Activated CD4-positive, alpha-beta memory T cell treated with anti-CD3 and anti-CD28 coated beads for 36 hours (primary cell): ENCODE measurements at regions of chr19 and their contacts with region 1.

Region 1: DNA sequence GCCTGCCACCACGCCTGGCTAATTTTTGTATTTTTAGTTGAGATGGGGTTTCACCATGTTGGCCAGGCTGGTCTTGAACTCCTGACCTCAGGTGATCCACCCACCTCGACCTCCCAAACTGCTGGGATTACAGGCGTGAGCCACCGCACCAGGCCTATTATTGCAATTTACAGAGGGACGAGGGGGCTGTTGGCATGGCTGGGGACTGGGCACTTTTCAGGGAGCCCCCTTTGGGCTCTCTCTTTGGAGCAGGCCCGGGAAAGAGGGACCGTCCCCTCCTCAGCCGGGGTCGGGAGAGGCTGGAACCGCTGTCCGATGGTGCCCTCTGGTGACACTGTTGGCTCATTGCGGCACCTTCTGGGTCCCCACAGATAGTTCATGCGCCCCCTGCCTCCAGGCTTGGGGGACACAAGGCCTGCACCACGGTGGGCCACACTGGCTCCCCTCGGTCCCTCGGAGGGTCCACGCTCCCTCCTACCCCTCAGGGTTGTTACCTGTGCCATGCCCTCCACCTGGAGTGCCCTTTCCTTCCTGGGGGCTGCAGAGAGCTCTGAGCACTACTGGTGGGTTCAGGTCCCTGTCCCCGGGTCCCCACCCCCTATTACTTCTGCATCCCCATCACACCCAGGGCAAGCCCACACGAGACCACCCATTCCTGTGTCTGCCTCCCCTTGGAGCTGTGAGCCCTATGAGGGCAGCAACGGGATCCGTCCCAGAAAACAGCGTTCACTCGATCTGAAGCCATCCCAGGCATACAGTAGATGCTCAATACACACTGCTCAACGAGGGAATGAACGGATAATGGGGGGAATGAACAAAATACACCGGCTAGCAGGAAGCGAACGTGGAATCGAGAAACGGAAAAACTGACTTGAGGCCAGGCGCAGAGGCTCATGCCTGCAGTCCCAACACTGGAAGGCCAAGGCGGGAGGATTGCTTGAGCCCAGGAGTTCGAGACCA is 12.5 kb downstream of the FEM1A start:
- DNase-seq: peak; percentile 73
- H3K4me3 Mint-ChIP-seq: no peak overlapping the region
- H3K27ac Mint-ChIP-seq: no peak overlapping the region
- H3K4me1 Mint-ChIP-seq: no peaks in the 10 kb centered on the region
- H3K27me3 Mint-ChIP-seq: no peaks in the 10 kb centered on the region

Region 2: GRCh38 chr19:4732680-4733114 is 71.3 kb before region 1 on chr19:
- CTCF ChIA-PET with region 1: interaction called, 17 read pairs
- POLR2A ChIA-PET with region 1: interaction called, 3 read pairs
- intact Hi-C with region 1: loop called (anchors 1 kb)
- DNase-seq: peak; percentile 70
- H3K4me3 Mint-ChIP-seq: peak overlapping the region; percentile 20
- H3K27ac Mint-ChIP-seq: no peak overlapping the region
- H3K4me1 Mint-ChIP-seq: peaks cover 4% of the 10 kb centered on the region
- H3K27me3 Mint-ChIP-seq: peaks cover 4% of the 10 kb centered on the region